T-cell (primary cell): ENCODE measurements at regions of chr3 and their contacts with region 1.

Region 1: DNA sequence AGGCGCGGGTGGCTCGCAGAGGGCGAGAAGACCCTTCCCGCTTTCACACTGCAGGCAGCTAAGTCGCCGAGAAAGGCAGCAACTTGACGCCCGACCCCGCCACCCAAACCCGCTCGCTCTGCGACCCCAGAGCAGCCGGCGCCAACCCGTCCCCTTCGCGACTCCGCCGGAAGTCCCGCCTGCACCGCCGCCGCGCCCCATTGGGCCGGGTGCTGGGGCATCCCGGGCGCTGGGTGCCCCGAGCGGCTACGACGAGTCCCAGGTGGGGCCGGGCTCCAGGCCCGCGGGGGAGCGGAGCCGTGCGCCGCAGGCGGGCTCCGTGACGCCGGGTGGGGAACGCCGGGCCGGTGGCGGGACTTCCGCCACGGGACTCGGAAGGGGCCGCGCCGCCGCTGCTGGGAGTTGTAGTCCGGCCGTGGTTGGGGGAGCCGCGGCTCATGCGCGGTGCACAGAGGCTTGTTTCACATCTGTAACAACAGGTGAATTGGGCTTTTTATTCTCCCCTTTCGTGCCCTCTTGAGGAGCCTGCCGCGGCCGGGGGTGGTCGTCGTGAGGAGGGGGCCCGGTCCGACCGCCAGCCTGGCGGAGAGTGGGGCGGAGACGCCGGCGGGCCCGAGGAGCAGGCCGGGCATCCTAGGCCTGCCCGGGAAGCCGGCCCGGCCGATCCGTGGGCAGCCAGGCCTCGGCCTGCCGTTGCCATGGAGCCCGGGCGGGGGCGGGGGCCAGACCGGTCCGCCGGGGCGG is at the start of gene DHX30:
- DNase-seq: peak; percentile 67 to 91 (median 81)
- ATAC-seq: peak; percentile 94
- H3K4me3 ChIP-seq: peak within 1 kb of the TSS; percentile 88 to 93
- H3K4me3 Mint-ChIP-seq: peak within 1 kb of the TSS; percentile 92 to 94 (median 94)
- H3K27ac ChIP-seq: peak within 1 kb of the TSS; percentile 88
- H3K27ac Mint-ChIP-seq: peak within 1 kb of the TSS; percentile 95 to 96
- H3K4me1 ChIP-seq: peaks cover 9 to 17% of the 10 kb centered on the region in 2 experiments
- H3K4me1 Mint-ChIP-seq: peaks cover 21 to 30% (median 25%) of the 10 kb centered on the region in 3 donors
- H3K27me3 ChIP-seq: no peaks in the 10 kb centered on the region
- H3K27me3 Mint-ChIP-seq: no peaks in the 10 kb centered on the region
- total RNA-seq, gene DHX30: 69.3 to 101 (median 97.5) TPM

Region 2: GRCh38 chr3:46923559-46924350 is 879.2 kb before region 1 on chr3:
- CTCF ChIA-PET with region 1: no interaction called
- POLR2A ChIA-PET with region 1: no interaction called
- DNase-seq: peak in 22 of 35 experiments; percentile 14 to 59 (median 28)
- ATAC-seq: peak in 2 of 4 experiments; percentile 38 to 52
- H3K4me3 ChIP-seq: no peak overlapping the region
- H3K4me3 Mint-ChIP-seq: no peak overlapping the region
- H3K27ac ChIP-seq: no peak overlapping the region
- H3K27ac Mint-ChIP-seq: no peak overlapping the region
- H3K4me1 ChIP-seq: peaks cover 7 to 50% of the 10 kb centered on the region in 2 experiments
- H3K4me1 Mint-ChIP-seq: peaks cover 35 to 46% (median 36%) of the 10 kb centered on the region in 3 donors
- H3K27me3 ChIP-seq: no peaks in the 10 kb centered on the region
- H3K27me3 Mint-ChIP-seq: no peaks in the 10 kb centered on the region

Region 3: DNA sequence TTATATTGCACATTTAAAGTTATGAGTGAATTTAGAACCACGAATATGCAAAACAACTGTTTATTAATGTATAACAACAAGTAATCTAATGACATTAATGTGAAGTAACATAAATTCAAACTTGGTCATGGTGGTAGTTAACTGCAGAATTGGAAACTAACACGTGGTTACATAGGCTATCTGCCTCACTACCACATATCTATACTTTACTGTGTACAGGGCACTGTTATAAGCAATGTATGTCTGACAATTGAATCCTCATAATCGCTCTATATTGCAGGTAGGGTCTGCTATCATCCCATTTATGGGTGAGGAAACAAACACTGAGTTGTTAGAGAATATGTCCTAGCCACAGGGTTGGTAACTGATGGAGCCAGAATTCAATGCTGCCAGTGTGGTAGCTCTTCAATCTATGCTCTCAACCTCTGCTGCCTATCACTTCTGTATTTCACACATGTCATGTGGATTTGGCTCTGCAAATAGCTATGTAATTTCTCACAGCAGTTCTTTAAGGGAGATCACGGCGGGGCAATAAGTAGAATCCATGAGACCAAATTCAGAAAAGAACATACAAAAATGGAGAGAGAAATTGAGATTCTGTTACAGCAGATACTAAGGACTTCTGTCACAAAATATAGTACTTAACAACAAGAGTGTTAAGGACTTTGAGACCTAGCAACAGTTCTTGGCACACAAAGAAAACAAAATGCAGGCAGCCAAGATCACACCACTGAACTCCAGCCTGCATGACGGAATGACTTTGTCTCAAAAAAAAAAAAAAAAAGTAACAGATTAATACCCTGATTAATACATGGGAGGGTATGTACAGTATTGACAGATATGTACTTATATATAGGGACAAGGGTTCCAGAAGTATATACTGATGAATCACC is 124.2 kb before region 1 on chr3:
- CTCF ChIA-PET with region 1: no interaction called
- POLR2A ChIA-PET with region 1: interaction called in 1 of 2 experiments, 14 read pairs
- DNase-seq: no peak
- ATAC-seq: no peak
- H3K4me3 ChIP-seq: no peak overlapping the region
- H3K4me3 Mint-ChIP-seq: no peak overlapping the region
- H3K27ac ChIP-seq: no peak overlapping the region
- H3K27ac Mint-ChIP-seq: no peak overlapping the region
- H3K4me1 ChIP-seq: no peaks in the 10 kb centered on the region
- H3K4me1 Mint-ChIP-seq: no peaks in the 10 kb centered on the region
- H3K27me3 ChIP-seq: no peaks in the 10 kb centered on the region
- H3K27me3 Mint-ChIP-seq: no peaks in the 10 kb centered on the region